AG04449 (cell line): ENCODE measurements at regions of chr15 and their contacts with region 1.

Region 1: DNA sequence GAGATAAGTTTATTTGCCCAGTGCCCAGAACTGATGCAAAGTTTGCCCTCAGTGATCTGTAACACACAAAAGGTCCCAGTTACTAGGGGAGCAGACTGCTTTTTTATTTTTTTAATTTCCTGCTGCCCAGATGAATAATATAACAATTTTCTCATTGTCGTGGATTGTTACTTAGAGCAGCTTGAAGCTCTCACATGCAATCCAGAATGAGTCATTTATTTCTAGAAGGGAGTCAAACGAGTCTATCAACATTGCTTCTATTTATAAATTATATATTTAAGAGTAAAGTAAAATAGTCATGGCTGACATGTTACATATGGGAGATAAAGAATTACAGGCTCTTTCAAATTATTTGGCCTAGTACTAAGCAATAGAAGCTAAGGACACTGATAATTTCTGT is 41.3 kb downstream of the MEIS2 start:
- DNase-seq: peak; percentile 57
- H3K4me3 ChIP-seq: no peak overlapping the region
- CTCF ChIP-seq: no peak

Region 2: DNA sequence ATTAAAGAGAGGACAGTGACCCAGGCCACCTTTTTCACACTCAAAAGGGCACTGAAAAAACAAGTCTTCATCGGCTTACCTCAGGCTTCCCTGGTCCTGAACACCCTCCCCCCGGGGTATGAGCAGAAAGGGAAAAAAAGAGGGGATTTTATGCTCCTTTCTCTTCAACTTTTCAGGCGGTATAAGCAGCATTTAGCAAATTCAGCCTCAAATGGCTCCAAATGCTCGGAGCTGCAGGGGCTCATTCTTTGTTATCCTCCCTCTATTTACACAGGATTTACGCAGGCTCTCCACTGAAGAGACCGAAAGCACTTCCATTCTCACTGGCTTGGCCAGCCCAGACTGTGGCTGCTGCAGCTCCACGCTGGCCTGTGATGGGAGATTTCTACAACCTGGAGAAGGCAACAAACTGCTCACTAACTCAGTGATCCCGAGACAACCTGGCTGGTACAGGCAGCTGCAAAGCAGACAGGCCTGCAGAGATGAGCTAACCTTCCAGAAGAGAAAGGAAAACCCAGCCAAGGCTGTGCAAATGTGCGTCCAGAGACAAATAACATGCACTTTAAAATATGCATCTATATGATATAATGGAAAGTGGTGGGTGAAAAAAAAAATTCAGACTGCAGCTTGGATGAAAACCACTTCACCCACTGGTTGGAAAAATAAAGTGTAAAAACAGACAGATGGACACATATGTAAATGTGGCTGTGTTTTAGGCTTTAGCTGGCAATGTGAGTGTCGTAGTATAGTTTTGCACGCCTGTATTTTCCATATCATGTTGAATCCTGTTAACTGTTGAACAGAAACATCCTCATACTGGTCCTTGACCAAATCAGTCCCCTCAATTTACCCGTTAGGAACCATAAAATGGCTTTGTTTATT is 13.0 kb before region 1 on chr15:
- CTCF ChIA-PET with region 1: interaction called, 10 read pairs
- POLR2A ChIA-PET with region 1: interaction called, 3 read pairs
- DNase-seq: no peak
- H3K4me3 ChIP-seq: no peak overlapping the region
- CTCF ChIP-seq: no peak

Region 3: GRCh38 chr15:37072181-37072580 is 13.1 kb after region 1 on chr15:
- CTCF ChIA-PET with region 1: no interaction called
- POLR2A ChIA-PET with region 1: no interaction called
- DNase-seq: no peak
- H3K4me3 ChIP-seq: no peak overlapping the region
- CTCF ChIP-seq: no peak

Region 4: GRCh38 chr15:37125143-37125542 is 66.1 kb after region 1 on chr15:
- CTCF ChIA-PET with region 1: no interaction called
- POLR2A ChIA-PET with region 1: no interaction called
- DNase-seq: no peak
- H3K4me3 ChIP-seq: no peak overlapping the region
- CTCF ChIP-seq: no peak